Panc1 (cell line): ENCODE measurements at regions of chr1 and their contacts with region 1.

Region 1: GRCh38 chr1:24391882-24392603 is 21.5 kb downstream of the STPG1 start:
- DNase-seq: no peak
- ATAC-seq: peak; percentile 91
- H3K4me3 ChIP-seq: peak overlapping the region in 1 of 2 experiments; percentile 12; a peak in 2 of 4 replicates
- H3K27ac ChIP-seq: peak overlapping the region; percentile 70
- H3K4me1 ChIP-seq: peaks cover 22% of the 10 kb centered on the region
- H3K27me3 ChIP-seq: no peaks in the 10 kb centered on the region
- CTCF ChIP-seq: peak; percentile 91

Region 2: GRCh38 chr1:24070821-24071393 is 321.1 kb before region 1 on chr1:
- CTCF ChIA-PET with region 1: interaction called, 3 read pairs
- POLR2A ChIA-PET with region 1: no interaction called
- in situ Hi-C with region 1: no loop called
- intact Hi-C with region 1: loop called (anchors 5 kb)
- DNase-seq: peak; percentile 67
- ATAC-seq: peak; percentile 95
- H3K4me3 ChIP-seq: no peak overlapping the region
- H3K27ac ChIP-seq: no peak overlapping the region
- H3K4me1 ChIP-seq: peaks cover 8% of the 10 kb centered on the region; the same call in 1 of the 2 replicates
- H3K27me3 ChIP-seq: no peaks in the 10 kb centered on the region
- CTCF ChIP-seq: peak; percentile 95

Region 3: DNA sequence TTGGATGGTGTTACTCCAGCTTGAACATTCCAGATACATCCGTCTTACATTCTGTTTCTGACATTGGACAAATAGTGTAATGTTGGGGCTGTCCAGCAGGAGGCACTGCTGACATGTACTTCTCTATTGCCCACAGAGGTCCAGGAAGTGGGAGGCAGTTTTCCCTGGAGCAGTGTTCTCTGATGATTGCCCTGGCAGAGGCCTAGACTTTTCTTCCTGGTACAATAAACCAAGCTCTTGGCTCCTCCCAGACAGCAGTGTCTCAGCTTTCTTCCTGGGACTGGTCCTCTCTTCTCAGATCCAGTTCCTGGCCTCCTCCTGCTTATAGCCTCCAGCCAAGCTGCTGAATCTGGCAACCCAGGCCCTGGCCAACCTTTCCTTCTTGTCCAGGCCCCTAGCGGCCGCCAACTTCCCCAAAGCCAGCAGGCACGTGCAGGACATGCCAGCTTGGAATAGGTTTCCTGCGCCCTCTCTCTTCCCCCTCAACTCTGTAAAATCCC is 190.1 kb before region 1 on chr1:
- CTCF ChIA-PET with region 1: interaction called, 125 read pairs
- POLR2A ChIA-PET with region 1: interaction called, 4 read pairs
- in situ Hi-C with region 1: loop called (anchors 5 kb)
- intact Hi-C with region 1: loop called (anchors 1 kb)
- DNase-seq: peak; percentile 86
- ATAC-seq: peak; percentile 87
- H3K4me3 ChIP-seq: no peak overlapping the region
- H3K27ac ChIP-seq: peak overlapping the region; percentile 75
- H3K4me1 ChIP-seq: peaks cover 9% of the 10 kb centered on the region
- H3K27me3 ChIP-seq: no peaks in the 10 kb centered on the region
- CTCF ChIP-seq: peak; percentile 88

Region 4: GRCh38 chr1:24319312-24319863 is 72.7 kb before region 1 on chr1 and contains the start of gene GRHL3:
- CTCF ChIA-PET with region 1: interaction called, 3 read pairs
- POLR2A ChIA-PET with region 1: no interaction called
- in situ Hi-C with region 1: no loop called
- intact Hi-C with region 1: loop called (anchors 2 kb)
- DNase-seq: no peak
- ATAC-seq: peak; percentile 16; the same call in 1 of the 2 replicates
- H3K4me3 ChIP-seq: peak within 1 kb of the TSS; percentile 46 to 71
- H3K27ac ChIP-seq: peak within 1 kb of the TSS; percentile 88
- H3K4me1 ChIP-seq: peaks cover 64% of the 10 kb centered on the region
- H3K27me3 ChIP-seq: no peaks in the 10 kb centered on the region
- CTCF ChIP-seq: no peak
- total RNA-seq, gene GRHL3: 16.7 TPM

Region 5: DNA sequence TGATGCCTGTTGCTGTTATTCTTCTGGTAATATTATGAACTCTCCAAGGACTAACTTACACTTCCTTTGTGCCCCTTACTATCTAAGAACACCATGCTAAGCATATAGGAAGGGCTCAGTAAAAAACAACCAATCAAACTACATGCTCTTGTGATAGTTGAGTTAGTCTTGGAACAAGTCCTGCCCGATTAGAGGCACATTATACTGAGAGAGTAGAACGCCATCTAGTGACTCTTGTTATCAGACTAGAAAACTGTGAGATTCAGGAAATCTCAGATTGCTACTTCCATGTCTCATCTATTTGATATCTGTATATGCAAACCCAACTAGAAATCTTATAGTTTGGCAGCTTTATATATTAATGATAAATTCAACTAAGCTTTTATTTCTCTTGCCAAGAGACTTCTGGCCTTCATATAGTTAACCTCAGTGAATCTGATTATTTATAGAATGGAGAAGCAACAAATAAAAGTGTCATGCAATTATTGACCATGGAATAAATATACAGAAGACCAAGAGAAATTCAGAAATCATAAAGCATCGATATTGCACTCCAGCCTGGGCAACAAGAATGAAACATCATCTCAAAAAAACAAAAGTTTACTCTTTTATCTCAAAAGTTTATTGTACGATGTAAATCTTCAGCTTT is 243.3 kb after region 1 on chr1:
- CTCF ChIA-PET with region 1: interaction called, 5 read pairs
- POLR2A ChIA-PET with region 1: no interaction called
- in situ Hi-C with region 1: loop called (anchors 10 kb)
- intact Hi-C with region 1: no loop called
- DNase-seq: peak; percentile 58
- ATAC-seq: peak; percentile 90
- H3K4me3 ChIP-seq: no peak overlapping the region
- H3K27ac ChIP-seq: no peak overlapping the region
- H3K4me1 ChIP-seq: no peaks in the 10 kb centered on the region
- H3K27me3 ChIP-seq: no peaks in the 10 kb centered on the region
- CTCF ChIP-seq: peak; percentile 73; the same call in 1 of the 2 replicates